ENCODE measurements at regions of chr22 and their contacts with region 1.

Region 1: DNA sequence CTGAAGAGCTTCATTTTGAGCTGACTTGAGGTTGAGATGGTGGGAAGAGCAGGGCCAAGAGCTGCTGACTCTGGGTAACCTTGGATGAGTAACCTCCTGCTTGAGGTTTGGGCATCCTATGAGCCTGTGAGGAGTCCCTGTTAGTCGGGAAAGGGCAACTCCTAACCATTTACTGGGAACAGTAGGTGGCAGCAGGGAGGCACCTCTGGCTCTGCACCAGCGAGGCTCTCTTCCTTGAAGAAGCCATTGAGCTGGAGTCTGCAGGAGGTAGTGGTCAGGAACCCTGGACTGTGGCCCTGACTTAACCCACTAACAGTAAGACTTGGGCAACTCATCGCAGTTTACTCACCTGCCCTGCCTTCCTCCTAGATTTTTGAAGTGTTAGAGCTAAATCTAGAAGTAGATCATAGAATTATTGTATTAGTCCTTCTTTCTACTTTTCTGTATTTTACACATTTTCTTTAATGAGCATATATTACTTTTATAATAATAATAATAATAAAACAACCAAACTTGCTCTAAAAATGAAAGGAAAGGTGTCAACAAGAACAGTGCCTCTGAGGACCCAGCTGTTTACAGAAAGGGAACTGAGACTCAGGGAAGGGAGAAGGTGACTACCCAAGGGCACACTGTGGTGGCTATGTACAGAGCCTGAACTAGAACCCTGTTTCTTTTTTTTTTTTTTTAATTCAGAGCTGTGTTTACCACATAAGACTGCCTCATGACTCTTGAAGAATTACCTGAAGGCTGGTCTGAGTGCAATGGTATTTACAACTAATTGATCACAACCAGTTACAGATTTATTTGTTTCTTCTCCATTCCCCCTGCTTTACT is 47.5 kb downstream of the MEI1 start:
- DNase-seq: peak; percentile 85
- H3K4me3 ChIP-seq: no peak overlapping the region
- H3K27ac ChIP-seq: peak overlapping the region; percentile 57
- H3K4me1 ChIP-seq: peaks cover 35% of the 10 kb centered on the region
- CTCF ChIP-seq: peak; percentile 85

Region 2: DNA sequence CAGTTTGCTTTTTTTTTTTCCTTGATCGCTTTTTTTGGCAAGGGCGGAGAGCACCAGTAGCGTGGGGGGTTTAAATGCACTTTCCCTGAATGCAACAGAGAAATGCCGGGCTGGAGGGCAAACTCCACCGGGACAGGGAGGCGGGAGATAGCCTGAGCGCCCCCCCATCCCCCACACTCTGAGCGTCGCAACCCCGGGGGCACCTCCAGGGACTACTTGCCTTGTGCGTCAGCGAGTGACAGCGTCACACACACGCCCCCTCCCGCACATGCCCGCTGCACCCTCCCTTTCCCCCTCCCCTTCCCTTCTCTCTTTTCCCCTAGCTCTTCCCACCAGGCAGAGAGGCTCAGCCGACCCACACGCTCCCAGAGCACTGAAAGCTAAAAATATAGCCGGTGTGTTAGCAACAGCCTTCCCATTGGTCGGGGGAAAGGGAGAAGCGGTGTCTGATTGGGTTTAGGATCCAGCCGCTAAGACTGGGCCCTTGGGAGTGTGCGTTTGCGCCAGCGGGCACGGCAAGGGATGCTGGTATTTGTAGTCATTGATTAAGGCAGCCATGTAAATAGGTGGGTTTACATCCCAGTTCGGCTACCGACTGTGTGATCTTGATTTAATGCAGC is 298.5 kb before region 1 on chr22:
- CTCF ChIA-PET with region 1: no interaction called
- POLR2A ChIA-PET with region 1: no interaction called
- intact Hi-C with region 1: no loop called
- DNase-seq: peak; percentile 97
- H3K4me3 ChIP-seq: peak overlapping the region; percentile 83
- H3K27ac ChIP-seq: peak overlapping the region; percentile 85
- H3K4me1 ChIP-seq: peaks cover 14% of the 10 kb centered on the region
- CTCF ChIP-seq: no peak

Region 3: DNA sequence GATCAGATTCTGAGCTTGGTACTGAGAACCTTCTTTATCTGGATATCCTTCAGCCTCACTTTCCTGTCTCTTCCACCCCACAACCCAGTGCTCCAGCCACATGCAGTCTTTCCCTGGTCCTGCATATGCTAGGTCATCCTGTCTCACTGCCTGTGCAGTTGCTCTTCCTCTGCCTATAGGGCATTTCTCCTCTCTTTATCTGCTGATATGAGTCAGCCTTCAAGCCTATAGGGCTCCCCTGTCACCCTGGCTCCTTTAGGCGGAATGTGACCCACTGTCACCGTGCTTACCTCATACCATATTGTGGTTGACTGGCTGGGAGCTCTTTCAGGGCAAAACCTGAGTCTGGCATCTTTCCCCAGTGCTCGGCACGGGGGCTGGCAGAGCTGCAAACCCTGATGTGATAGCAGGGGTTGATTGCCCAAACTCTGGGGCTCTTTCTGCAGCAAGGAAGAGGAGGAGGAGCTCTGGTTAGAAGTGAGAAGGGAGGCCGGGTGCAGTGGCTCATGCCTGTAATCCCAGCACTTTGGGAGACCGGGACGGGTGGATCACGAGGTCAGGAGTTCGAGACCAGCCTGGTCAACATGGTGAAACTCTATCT is 21.2 kb before region 1 on chr22:
- CTCF ChIA-PET with region 1: no interaction called
- POLR2A ChIA-PET with region 1: interaction called, 11 read pairs
- intact Hi-C with region 1: no loop called
- DNase-seq: no peak
- H3K4me3 ChIP-seq: no peak overlapping the region
- H3K27ac ChIP-seq: no peak overlapping the region
- H3K4me1 ChIP-seq: no peaks in the 10 kb centered on the region
- CTCF ChIP-seq: no peak

Region 4: GRCh38 chr22:41780746-41781505 is 34.1 kb after region 1 on chr22:
- CTCF ChIA-PET with region 1: interaction called, 3 read pairs
- POLR2A ChIA-PET with region 1: interaction called, 16 read pairs
- intact Hi-C with region 1: loop called (anchors 1 kb)
- DNase-seq: peak; percentile 78
- H3K4me3 ChIP-seq: peak overlapping the region; percentile 22
- H3K27ac ChIP-seq: no peak overlapping the region
- H3K4me1 ChIP-seq: peaks cover 14% of the 10 kb centered on the region
- CTCF ChIP-seq: no peak

Region 5: DNA sequence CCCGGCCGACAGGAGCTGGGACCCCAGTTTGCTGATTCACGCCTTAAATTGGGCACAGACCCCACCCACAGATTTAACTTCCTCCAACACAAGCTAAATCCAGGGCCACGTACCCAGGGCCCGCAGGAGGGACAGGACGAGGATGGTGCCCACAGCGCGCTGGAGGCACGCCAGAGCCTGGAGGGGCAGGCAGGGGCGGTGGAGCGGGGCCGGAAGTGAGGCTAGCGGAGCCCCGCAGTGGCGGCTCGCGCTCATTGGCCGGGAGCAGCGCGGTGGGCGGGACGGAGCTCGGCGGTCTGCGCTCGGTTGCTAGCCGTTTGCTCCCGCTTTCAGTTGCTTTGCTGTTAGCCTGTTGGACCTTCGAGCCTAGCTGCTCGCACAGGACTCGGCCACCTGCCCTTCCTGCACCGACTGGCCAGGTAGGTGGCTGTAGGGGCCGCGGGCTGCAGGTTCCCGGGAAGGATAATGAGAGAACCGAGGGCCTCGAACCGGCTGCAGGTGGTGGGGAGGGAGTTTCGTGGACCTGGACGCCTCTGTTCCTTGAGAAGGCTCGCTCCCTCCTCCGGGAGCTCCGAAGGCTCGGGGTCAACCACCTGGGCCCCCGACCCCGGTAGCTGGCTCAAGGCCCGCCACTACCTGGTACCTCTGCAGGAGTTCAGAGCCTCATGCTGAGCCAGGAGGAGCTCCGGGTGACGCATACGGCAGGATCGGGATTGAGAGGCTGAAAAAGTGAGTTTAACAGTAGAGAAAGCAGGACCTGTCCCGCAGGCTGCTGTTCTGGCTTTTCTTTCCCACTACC is 53.8 kb after region 1 on chr22 and contains the start of gene CCDC134:
- CTCF ChIA-PET with region 1: interaction called, 9 read pairs
- POLR2A ChIA-PET with region 1: interaction called, 4 read pairs
- intact Hi-C with region 1: loop called (anchors 5 kb)
- DNase-seq: peak; percentile 91
- H3K4me3 ChIP-seq: peak within 1 kb of the TSS; percentile 79
- H3K27ac ChIP-seq: peak within 1 kb of the TSS; percentile 37
- H3K4me1 ChIP-seq: peaks cover 39% of the 10 kb centered on the region
- CTCF ChIP-seq: no peak
- total RNA-seq, gene CCDC134: 21.7 and 23.8 TPM in 2 replicates

Region 6: DNA sequence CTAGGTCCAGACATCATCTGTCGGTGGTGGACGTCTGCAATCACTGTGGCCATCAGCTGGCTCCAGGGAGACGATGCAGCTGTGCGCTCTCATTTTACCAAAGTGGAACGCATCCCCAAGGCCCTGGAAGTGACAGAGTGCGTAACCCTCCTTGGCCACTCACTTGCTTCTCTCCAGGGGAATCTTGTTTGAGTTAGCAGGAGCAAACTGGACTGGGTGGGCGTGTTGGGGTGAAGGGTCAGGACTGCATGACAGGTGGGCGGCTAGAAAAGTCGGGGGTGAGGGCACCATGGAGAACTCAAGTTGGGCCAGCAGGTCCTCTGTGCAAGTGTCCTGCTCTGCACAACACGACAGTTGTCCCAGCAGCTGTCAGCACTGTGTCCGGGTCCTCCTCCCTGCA is 151.9 kb after region 1 on chr22:
- CTCF ChIA-PET with region 1: interaction called, 11 read pairs
- POLR2A ChIA-PET with region 1: no interaction called
- intact Hi-C with region 1: no loop called
- DNase-seq: no peak
- H3K4me3 ChIP-seq: no peak overlapping the region
- H3K27ac ChIP-seq: no peak overlapping the region
- H3K4me1 ChIP-seq: no peaks in the 10 kb centered on the region
- CTCF ChIP-seq: no peak

Region 7: DNA sequence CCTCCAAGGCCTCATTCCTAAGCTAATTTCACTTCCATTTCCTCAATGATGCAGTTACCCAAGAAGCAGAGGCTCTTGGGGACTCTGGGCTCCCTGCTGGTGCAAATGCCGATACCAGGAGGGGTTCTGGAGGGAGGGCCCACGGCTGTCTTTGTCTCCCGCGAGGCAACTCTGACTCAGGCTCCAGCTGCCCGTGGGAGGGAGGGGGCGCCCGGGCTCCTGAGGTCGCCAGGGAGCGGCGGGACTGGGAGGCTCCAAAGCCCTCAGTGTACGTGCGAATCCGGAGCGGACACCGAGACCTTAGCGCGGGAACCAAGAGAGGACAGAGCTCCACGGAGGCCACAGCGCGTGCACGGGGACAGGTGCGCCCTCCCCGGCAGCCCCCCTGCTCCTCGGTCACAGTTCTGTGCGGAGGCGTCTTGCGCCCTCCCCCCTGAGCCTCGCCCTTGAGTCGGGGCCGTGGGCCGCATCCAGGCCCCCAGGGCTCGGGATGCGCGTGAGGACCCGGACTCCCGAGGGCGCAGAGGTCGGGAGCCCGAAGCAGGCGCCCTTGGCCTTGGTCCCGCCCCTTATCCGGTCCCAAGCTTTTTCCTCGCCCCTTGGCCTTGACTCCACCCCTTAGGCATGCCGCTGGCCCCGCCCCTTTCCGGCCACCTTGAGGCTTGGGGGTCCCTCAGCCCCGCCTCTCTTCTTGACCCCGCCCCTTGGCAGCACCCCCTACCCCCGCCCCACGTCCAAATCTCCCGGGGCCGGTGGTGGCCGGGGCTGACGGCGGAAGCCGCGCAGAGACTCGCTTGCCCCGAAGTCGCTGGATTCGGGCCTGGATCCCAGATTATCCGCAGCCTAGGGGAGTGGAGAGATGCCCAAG is 172.8 kb after region 1 on chr22:
- CTCF ChIA-PET with region 1: no interaction called
- POLR2A ChIA-PET with region 1: no interaction called
- intact Hi-C with region 1: loop called (anchors 10 kb)
- DNase-seq: peak; percentile 84
- H3K4me3 ChIP-seq: peak overlapping the region; percentile 59
- H3K27ac ChIP-seq: peak overlapping the region; percentile 88
- H3K4me1 ChIP-seq: peaks cover 81% of the 10 kb centered on the region
- CTCF ChIP-seq: 0 out of 2 replicates have a peak, but pooled peaks have one; percentile 15

Region 8: GRCh38 chr22:41940832-41941765 is 194.3 kb after region 1 on chr22:
- CTCF ChIA-PET with region 1: no interaction called
- POLR2A ChIA-PET with region 1: interaction called, 3 read pairs
- intact Hi-C with region 1: loop called (anchors 2 kb)
- DNase-seq: peak; percentile 85
- H3K4me3 ChIP-seq: peak overlapping the region; percentile 52
- H3K27ac ChIP-seq: peak overlapping the region; percentile 91
- H3K4me1 ChIP-seq: peaks cover 83% of the 10 kb centered on the region
- CTCF ChIP-seq: peak; percentile 92